ENCODE measurements at regions of chr12 and their contacts with region 1.

Region 1: DNA sequence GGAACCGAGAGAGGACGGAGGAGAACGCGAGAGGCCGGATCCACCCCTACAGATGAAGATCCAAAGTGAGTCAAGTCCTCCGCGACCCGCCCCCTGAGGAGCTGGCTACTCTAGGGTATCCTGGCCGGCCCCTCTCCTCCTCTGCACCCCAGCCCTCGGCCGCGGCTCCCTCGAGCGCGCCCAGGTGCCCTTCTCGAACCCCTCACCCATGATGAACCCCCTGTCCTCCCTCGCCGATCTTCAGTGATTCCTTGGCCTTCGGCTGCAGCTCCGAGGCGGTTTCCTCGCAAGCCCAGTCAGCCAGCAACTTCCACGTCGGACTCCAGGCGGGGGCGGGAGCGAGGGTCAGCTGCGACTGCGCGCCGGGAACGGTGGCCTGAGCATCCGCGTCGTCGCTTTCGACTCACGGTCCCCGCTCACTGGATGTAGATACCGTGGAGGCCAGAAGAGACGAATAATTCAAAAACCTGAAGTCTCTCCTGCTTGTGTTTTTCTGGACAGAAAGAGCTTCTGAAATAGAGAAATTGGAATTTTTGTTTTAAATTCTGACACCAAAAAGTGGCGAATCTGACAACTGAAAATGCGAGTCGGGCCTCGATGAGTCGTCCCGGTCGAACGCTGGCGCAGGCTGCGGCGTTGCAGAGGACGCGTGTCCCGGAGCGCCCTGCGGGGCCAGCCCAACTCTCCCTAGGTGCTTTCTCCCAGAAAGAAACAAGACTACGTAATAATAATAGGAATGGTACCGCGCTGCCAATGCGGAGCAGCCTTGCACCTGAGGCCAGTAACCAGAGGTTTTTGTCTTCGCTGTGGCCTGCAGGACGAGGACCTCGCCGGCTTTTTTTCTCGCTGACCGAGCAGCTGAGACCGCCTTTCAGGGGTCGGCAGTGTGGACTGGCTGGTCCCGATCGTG is at the start of gene ARL1:
- DNase-seq: peak; percentile 51 to 88 (median 66)
- ATAC-seq: peak; percentile 76
- H3K4me3 ChIP-seq: peak within 1 kb of the TSS; percentile 98
- H3K4me3 Mint-ChIP-seq: peak within 1 kb of the TSS; percentile 98
- H3K27ac ChIP-seq: peak within 1 kb of the TSS; percentile 70 to 85
- H3K27ac Mint-ChIP-seq: peak within 1 kb of the TSS; percentile 86
- H3K4me1 ChIP-seq: peaks cover 20% of the 10 kb centered on the region
- H3K4me1 Mint-ChIP-seq: peaks cover 35% of the 10 kb centered on the region
- H3K27me3 ChIP-seq: no peaks in the 10 kb centered on the region
- H3K27me3 Mint-ChIP-seq: no peaks in the 10 kb centered on the region
- CTCF ChIP-seq: no peak
- total RNA-seq, gene ARL1: 21.8 to 23.5 TPM

Region 2: DNA sequence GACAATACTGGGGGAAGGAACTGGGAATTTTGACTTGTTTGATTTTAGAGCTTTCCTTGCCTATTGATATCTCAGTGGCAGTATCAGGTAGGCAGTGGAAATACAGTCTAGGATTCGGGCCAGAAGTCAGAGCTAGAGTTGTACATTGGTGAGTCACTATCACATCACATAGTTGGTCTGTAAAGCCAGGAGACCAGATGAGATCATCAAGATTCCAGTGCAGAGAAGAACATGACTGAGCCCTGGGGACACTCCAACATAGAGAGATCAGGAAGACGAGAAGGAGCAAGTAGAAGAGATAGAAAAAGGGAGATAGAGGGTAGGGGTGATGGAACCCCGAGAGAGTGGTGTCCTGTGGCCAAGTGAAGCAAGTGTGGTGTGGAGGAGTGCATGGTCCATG is 980.6 kb before region 1 on chr12:
- CTCF ChIA-PET with region 1: no interaction called
- POLR2A ChIA-PET with region 1: no interaction called
- intact Hi-C with region 1: no loop called
- DNase-seq: no peak
- ATAC-seq: no peak
- H3K4me3 ChIP-seq: no peak overlapping the region
- H3K4me3 Mint-ChIP-seq: no peak overlapping the region
- H3K27ac ChIP-seq: no peak overlapping the region
- H3K27ac Mint-ChIP-seq: no peak overlapping the region
- H3K4me1 ChIP-seq: no peaks in the 10 kb centered on the region
- H3K4me1 Mint-ChIP-seq: no peaks in the 10 kb centered on the region
- H3K27me3 ChIP-seq: no peaks in the 10 kb centered on the region
- H3K27me3 Mint-ChIP-seq: peaks cover 9% of the 10 kb centered on the region
- CTCF ChIP-seq: no peak

Region 3: DNA sequence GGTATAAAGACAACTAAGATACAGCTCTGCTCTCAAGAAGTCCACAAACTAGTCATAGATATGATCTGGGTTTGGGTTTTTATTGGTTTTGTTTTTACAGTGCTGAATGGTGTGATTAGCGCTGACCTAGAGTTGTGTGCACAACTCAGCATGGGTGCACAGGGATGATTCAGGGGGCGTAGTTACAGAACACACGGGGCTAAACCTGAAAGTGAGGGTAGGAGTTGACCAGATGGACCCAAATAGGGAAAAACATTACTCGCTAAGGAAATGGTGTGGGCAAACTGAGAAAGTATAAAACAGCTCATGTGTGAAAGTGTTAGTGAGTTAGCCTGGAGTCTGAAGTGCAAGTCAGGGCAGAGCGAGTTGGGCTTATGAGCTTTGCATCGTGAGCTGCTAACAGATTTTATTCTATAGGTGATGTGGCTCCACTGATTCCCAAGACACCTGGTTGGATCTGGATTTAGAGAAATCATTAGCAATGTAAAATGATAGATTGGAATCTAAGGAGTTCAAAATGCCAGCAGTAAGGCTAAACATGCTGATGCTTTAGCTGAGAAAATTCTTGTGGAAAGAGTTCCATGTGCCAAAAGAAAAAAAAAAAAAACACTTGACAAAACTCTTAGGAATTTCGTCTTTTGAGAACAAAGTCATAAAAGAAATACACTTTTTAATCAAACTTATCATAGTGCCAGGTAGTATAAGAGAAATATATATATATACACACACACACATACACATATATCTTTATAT is 332.6 kb before region 1 on chr12:
- CTCF ChIA-PET with region 1: no interaction called
- POLR2A ChIA-PET with region 1: no interaction called
- intact Hi-C with region 1: no loop called
- DNase-seq: no peak
- ATAC-seq: no peak
- H3K4me3 ChIP-seq: no peak overlapping the region
- H3K4me3 Mint-ChIP-seq: no peak overlapping the region
- H3K27ac ChIP-seq: no peak overlapping the region
- H3K27ac Mint-ChIP-seq: no peak overlapping the region
- H3K4me1 ChIP-seq: no peaks in the 10 kb centered on the region
- H3K4me1 Mint-ChIP-seq: no peaks in the 10 kb centered on the region
- H3K27me3 ChIP-seq: no peaks in the 10 kb centered on the region
- H3K27me3 Mint-ChIP-seq: no peaks in the 10 kb centered on the region
- CTCF ChIP-seq: no peak

Region 4: GRCh38 chr12:101280006-101280505 is 127.6 kb before region 1 on chr12 and contains the start of gene UTP20:
- CTCF ChIA-PET with region 1: no interaction called
- POLR2A ChIA-PET with region 1: interaction called, 5 read pairs
- intact Hi-C with region 1: loop called in 1 of 2 experiments (anchors 5 kb)
- DNase-seq: peak; percentile 89 to 96 (median 94)
- ATAC-seq: peak; percentile 100
- H3K4me3 ChIP-seq: peak within 1 kb of the TSS; percentile 72
- H3K4me3 Mint-ChIP-seq: peak within 1 kb of the TSS; percentile 97
- H3K27ac ChIP-seq: no peak within 1 kb of the TSS
- H3K27ac Mint-ChIP-seq: peak within 1 kb of the TSS; percentile 71
- H3K4me1 ChIP-seq: peaks cover 8% of the 10 kb centered on the region
- H3K4me1 Mint-ChIP-seq: peaks cover 25% of the 10 kb centered on the region
- H3K27me3 ChIP-seq: no peaks in the 10 kb centered on the region
- H3K27me3 Mint-ChIP-seq: peaks cover 13% of the 10 kb centered on the region
- CTCF ChIP-seq: no peak
- total RNA-seq, gene UTP20: 9.1 to 9.6 TPM

Region 5: DNA sequence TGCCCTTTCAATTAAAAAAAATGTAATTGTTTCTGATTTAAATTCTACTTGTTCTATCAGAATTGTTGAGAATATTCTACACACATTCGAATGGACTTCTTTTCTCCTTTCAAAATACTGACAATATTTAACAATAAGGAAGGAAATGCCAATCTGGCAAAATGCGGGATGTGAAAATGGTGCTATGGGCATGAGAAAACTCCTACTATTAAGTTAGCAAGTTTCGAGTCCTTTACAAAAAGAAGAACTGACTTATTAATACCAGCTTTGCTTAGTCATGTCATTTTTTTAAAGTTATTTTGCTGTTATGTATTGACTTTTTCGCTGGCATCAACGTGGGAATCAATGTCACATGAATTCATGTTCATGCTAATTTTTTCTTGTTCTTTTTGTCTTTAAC is 31.5 kb after region 1 on chr12:
- CTCF ChIA-PET with region 1: no interaction called
- POLR2A ChIA-PET with region 1: no interaction called
- intact Hi-C with region 1: no loop called
- DNase-seq: no peak
- ATAC-seq: no peak
- H3K4me3 ChIP-seq: no peak overlapping the region
- H3K4me3 Mint-ChIP-seq: no peak overlapping the region
- H3K27ac ChIP-seq: no peak overlapping the region
- H3K27ac Mint-ChIP-seq: no peak overlapping the region
- H3K4me1 ChIP-seq: no peaks in the 10 kb centered on the region
- H3K4me1 Mint-ChIP-seq: no peaks in the 10 kb centered on the region
- H3K27me3 ChIP-seq: no peaks in the 10 kb centered on the region
- H3K27me3 Mint-ChIP-seq: peaks cover 4% of the 10 kb centered on the region
- CTCF ChIP-seq: no peak

Region 6: GRCh38 chr12:101521136-101521535 is 113.4 kb after region 1 on chr12:
- CTCF ChIA-PET with region 1: no interaction called
- POLR2A ChIA-PET with region 1: no interaction called
- intact Hi-C with region 1: no loop called
- DNase-seq: no peak
- ATAC-seq: no peak
- H3K4me3 ChIP-seq: no peak overlapping the region
- H3K4me3 Mint-ChIP-seq: no peak overlapping the region
- H3K27ac ChIP-seq: no peak overlapping the region
- H3K27ac Mint-ChIP-seq: no peak overlapping the region
- H3K4me1 ChIP-seq: no peaks in the 10 kb centered on the region
- H3K4me1 Mint-ChIP-seq: no peaks in the 10 kb centered on the region
- H3K27me3 ChIP-seq: peaks cover 0 to 2% of the 10 kb centered on the region in 2 experiments
- H3K27me3 Mint-ChIP-seq: peaks cover 12% of the 10 kb centered on the region
- CTCF ChIP-seq: no peak